ENCODE measurements at regions of chr2 and their contacts with region 1.

Region 1: GRCh38 chr2:85888684-85889626 is at the start of gene ST3GAL5:
- DNase-seq: peak; percentile 97
- H3K4me3 ChIP-seq: peak within 1 kb of the TSS; percentile 55 to 80 (median 69)
- H3K27ac ChIP-seq: peak within 1 kb of the TSS; percentile 52
- H3K4me1 ChIP-seq: peaks cover 33% of the 10 kb centered on the region
- H3K27me3 ChIP-seq: no peaks in the 10 kb centered on the region
- CTCF ChIP-seq: peak; percentile 82 to 97
- POLR2A ChIP-seq: peak; percentile 40
- total RNA-seq, gene ST3GAL5: 12.7 and 16.0 TPM in 2 replicates

Region 2: DNA sequence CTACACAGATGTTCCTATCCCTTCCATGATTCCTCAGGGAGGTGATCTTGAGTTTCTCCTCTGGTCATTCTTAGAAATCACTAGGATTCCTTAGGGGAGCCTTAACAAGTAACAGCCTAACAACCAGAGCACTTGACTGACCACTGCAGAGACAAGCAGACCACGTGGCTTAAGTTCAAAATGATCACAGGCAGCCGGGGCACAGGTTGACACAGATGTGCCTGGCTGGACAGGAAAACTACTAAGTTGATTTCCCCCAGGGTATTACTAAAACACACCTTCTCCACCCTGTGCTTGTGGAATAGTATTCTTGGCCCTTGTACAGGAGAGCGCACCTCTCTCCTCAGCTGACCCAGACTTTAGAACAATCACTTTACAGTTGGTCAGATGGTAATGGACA is 30.1 kb before region 1 on chr2:
- CTCF ChIA-PET with region 1: interaction called, 11 read pairs
- POLR2A ChIA-PET with region 1: interaction called, 3 read pairs
- dilution Hi-C with region 1: no loop called
- intact Hi-C with region 1: no loop called
- DNase-seq: no peak
- H3K4me3 ChIP-seq: no peak overlapping the region
- H3K27ac ChIP-seq: no peak overlapping the region
- H3K4me1 ChIP-seq: peaks cover 21% of the 10 kb centered on the region
- H3K27me3 ChIP-seq: no peaks in the 10 kb centered on the region
- CTCF ChIP-seq: no peak
- POLR2A ChIP-seq: no peak

Region 3: DNA sequence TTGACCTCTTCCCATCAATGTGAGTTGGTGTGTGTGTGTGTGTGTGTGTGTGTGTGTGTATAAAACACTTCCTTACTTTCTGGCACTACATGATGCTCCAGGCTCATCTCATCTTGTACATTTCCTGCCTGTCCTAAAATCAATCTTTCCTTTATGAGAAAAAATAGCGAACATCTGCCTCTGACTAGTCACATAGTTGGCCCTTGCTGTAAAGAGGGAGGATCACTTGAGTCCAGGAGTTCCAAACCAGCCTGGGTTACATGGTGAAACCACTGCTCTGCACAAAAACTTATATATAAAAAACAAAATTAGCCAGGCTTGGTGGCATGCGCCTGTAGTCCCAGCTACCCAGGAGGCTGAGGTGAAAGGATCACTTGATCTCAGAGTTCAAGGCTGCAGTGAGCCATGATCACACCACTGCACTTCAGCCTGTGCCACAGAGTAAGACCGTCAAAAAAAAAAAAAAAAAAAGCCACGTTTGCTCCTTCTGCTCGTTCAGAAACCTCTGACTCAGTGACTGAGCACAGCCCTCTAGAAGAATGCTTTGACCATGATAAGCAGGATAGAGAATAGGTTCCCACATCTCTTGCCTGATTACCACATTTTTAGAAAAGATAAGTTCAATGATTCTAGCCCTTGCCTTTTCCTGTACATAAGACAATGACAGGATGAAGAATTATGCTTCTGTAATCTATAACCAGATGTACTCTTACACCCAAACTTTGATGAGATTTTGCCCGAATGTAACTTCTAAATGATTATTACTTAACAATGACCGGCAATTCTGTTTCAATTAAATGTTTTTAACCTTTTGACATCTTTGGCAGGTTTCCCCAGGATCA is 45.0 kb after region 1 on chr2:
- CTCF ChIA-PET with region 1: interaction called, 3 read pairs
- POLR2A ChIA-PET with region 1: no interaction called
- dilution Hi-C with region 1: no loop called
- intact Hi-C with region 1: loop called (anchors 1 kb)
- DNase-seq: peak; percentile 79
- H3K4me3 ChIP-seq: no peak overlapping the region
- H3K27ac ChIP-seq: no peak overlapping the region
- H3K4me1 ChIP-seq: peaks cover 36% of the 10 kb centered on the region
- H3K27me3 ChIP-seq: no peaks in the 10 kb centered on the region
- CTCF ChIP-seq: no peak
- POLR2A ChIP-seq: no peak

Region 4: DNA sequence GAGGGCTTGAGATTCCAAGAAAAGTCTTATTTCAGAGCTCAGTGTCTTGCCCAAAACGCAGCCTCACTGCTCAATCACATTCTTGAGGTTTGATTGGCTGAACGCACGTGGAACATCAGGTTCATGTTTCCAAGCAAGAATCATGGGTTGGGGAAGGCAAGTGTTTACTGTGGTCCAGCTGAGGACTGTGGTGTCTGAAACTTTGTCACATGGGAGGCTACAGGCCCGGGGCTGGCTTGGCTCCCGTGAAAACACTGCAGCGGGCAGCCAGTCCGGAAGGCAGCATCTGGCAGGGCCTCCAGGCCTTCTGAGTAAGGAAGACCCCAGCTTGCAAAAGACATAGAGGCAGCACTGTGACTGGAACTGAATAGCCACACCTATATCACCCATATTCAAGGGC is 132.0 kb after region 1 on chr2:
- CTCF ChIA-PET with region 1: interaction called, 42 read pairs
- POLR2A ChIA-PET with region 1: no interaction called
- dilution Hi-C with region 1: no loop called
- intact Hi-C with region 1: no loop called
- DNase-seq: peak; percentile 87
- H3K4me3 ChIP-seq: no peak overlapping the region
- H3K27ac ChIP-seq: no peak overlapping the region
- H3K4me1 ChIP-seq: peaks cover 15% of the 10 kb centered on the region
- H3K27me3 ChIP-seq: no peaks in the 10 kb centered on the region
- CTCF ChIP-seq: no peak
- POLR2A ChIP-seq: no peak

Region 5: GRCh38 chr2:86035883-86036668 is 147.1 kb after region 1 on chr2:
- CTCF ChIA-PET with region 1: interaction called, 73 read pairs
- POLR2A ChIA-PET with region 1: interaction called, 9 read pairs
- dilution Hi-C with region 1: no loop called
- intact Hi-C with region 1: loop called (anchors 1 kb)
- DNase-seq: peak; percentile 94
- H3K4me3 ChIP-seq: no peak overlapping the region
- H3K27ac ChIP-seq: peak overlapping the region; percentile 96
- H3K4me1 ChIP-seq: peaks cover 43% of the 10 kb centered on the region
- H3K27me3 ChIP-seq: no peaks in the 10 kb centered on the region
- CTCF ChIP-seq: peak in 1 of 2 donors; percentile 30
- POLR2A ChIP-seq: no peak

Region 6: DNA sequence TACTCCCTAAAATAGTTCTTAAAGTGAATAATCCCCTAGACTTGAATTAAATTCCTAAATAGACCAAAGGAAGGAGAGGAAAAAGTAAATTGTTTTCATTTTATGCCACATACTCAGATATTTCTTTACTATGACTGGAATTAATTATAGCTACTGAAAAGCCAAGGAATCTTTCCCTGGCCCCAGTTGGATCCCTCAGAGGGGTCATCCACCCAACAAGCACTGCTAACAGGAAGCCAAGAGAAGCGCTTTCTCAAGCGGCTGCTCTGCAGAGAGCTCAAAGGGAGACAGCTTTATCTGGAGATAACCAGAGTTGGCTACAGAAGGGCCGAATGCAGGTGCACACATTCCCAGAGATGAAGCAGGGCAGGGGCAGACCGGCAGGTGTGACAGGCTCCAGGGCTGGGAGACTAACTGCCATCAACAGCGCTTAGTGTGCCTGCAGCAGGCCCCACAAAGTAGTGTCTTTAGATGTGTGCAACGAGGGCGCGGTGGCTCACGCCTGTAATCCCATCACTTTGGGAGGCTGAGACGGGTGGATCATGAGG is 165.7 kb after region 1 on chr2:
- CTCF ChIA-PET with region 1: no interaction called
- POLR2A ChIA-PET with region 1: no interaction called
- dilution Hi-C with region 1: no loop called
- intact Hi-C with region 1: no loop called
- DNase-seq: no peak
- H3K4me3 ChIP-seq: no peak overlapping the region
- H3K27ac ChIP-seq: no peak overlapping the region
- H3K4me1 ChIP-seq: no peaks in the 10 kb centered on the region
- H3K27me3 ChIP-seq: no peaks in the 10 kb centered on the region
- CTCF ChIP-seq: no peak
- POLR2A ChIP-seq: no peak

Region 7: GRCh38 chr2:86079981-86080911 is 191.3 kb after region 1 on chr2:
- CTCF ChIA-PET with region 1: interaction called, 78 read pairs
- POLR2A ChIA-PET with region 1: no interaction called
- dilution Hi-C with region 1: no loop called
- intact Hi-C with region 1: loop called (anchors 1 kb)
- DNase-seq: peak; percentile 58
- H3K4me3 ChIP-seq: no peak overlapping the region
- H3K27ac ChIP-seq: peak overlapping the region; percentile 9
- H3K4me1 ChIP-seq: peaks cover 3% of the 10 kb centered on the region
- H3K27me3 ChIP-seq: no peaks in the 10 kb centered on the region
- CTCF ChIP-seq: peak; percentile 84 to 91
- POLR2A ChIP-seq: no peak